ENCODE measurements at regions of chr7 and their contacts with region 1.

Region 1: GRCh38 chr7:154640266-154640865 is 362.6 kb downstream of the PAXIP1 start:
- DNase-seq: no peak
- H3K4me3 ChIP-seq: no peak overlapping the region
- H3K27ac ChIP-seq: no peak overlapping the region
- H3K4me1 ChIP-seq: no peaks in the 10 kb centered on the region
- H3K27me3 ChIP-seq: no peaks in the 10 kb centered on the region
- CTCF ChIP-seq: peak; percentile 30

Region 2: GRCh38 chr7:154744256-154744860 is 104.0 kb after region 1 on chr7:
- intact Hi-C with region 1: loop called (anchors 2 kb)
- DNase-seq: peak; percentile 29
- H3K4me3 ChIP-seq: no peak overlapping the region
- H3K27ac ChIP-seq: no peak overlapping the region
- H3K4me1 ChIP-seq: no peaks in the 10 kb centered on the region
- H3K27me3 ChIP-seq: no peaks in the 10 kb centered on the region
- CTCF ChIP-seq: peak; percentile 79

Region 3: DNA sequence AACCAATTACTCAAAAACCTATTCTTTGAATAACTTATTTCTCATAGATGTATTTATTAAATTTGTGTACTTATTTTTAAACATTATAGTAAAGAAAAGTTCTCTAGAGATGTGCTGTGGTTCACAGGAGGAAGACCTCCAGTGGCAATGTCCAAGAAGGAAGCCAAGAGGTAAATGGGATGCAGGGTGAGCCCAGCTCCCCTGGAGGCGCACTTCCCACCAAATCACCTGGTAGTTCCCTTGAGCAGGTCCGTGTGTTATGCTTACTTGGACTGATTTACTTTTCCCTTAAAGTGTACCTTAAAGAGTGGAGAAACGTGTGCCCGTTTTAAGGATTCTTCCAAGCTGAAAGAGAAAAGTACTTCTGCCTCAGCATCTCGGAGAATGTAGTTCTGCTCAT is 307.2 kb after region 1 on chr7:
- intact Hi-C with region 1: no loop called
- DNase-seq: no peak
- H3K4me3 ChIP-seq: no peak overlapping the region
- H3K27ac ChIP-seq: no peak overlapping the region
- H3K4me1 ChIP-seq: no peaks in the 10 kb centered on the region
- H3K27me3 ChIP-seq: no peaks in the 10 kb centered on the region
- CTCF ChIP-seq: no peak

Measured in colonic mucosa (tissue), 4 donors.